Calu3 (cell line): ENCODE measurements at regions of chr4 and their contacts with region 1.

Region 1: GRCh38 chr4:130359542-130359941 is 1263.6 kb downstream of the C4orf33 start:
- DNase-seq: no peak
- H3K4me3 Mint-ChIP-seq: no peak overlapping the region
- H3K27ac Mint-ChIP-seq: no peak overlapping the region
- H3K4me1 Mint-ChIP-seq: no peaks in the 10 kb centered on the region
- H3K27me3 Mint-ChIP-seq: no peaks in the 10 kb centered on the region
- CTCF ChIP-seq: no peak

Region 2: DNA sequence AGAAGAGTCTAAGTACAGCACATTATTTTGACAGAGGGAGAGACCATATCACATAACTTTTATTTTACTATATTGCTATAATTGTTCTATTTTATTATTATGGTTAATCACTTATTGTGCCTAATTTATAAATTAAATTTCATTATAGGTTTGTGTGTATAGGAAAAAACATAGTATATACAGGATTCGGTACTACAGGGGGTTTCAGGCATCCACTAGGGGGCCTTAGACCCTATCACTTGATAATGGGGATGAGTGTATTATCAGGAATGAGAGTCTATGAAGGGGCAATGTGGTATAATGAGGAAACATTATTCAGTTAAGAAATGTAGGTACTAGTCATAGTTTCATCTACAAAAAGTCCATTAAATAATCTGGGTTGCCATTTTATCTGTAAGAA is 430.5 kb before region 1 on chr4:
- CTCF ChIA-PET with region 1: no interaction called
- intact Hi-C with region 1: loop called (anchors 2 kb)
- DNase-seq: peak; percentile 3
- H3K4me3 Mint-ChIP-seq: no peak overlapping the region
- H3K27ac Mint-ChIP-seq: no peak overlapping the region
- H3K4me1 Mint-ChIP-seq: no peaks in the 10 kb centered on the region
- H3K27me3 Mint-ChIP-seq: no peaks in the 10 kb centered on the region
- CTCF ChIP-seq: no peak

Region 3: DNA sequence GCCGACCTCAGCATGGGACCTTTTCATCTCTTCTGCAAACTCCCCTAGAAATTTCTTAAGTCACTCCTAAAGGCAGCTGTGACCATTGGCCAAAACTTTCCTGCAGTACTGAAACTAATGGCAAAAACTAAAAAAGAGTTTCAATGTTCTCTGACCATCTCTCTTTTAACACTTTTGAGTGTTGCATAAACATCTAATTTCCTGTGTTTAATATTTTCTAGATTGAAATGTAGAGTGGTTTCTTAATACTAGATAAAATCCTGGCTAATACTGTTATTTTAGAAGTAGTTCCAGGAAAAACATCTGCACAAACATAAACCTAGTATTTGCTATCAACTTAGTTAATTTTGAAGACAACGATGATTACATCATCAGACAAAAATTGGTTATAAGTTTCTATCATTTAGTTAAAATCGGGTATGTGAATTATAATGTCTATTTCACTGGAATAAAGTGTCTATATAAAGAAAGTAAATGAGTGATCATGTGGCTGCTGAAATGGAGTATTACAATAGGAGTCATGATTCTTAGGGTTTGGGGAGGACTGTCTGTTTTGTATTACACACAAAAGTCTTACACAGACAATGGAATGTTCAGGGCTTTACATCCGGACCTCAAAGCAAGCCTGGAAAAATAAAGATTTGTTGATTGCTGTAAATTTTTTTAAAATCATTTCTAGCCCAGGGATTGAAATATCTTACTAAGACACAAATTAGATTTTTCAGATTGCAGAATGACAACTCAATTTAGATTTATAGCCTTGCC is 59.9 kb after region 1 on chr4:
- CTCF ChIA-PET with region 1: no interaction called
- intact Hi-C with region 1: loop called (anchors 5 kb)
- DNase-seq: no peak
- H3K4me3 Mint-ChIP-seq: no peak overlapping the region
- H3K27ac Mint-ChIP-seq: no peak overlapping the region
- H3K4me1 Mint-ChIP-seq: peaks cover 11% of the 10 kb centered on the region
- H3K27me3 Mint-ChIP-seq: no peaks in the 10 kb centered on the region
- CTCF ChIP-seq: no peak

Region 4: DNA sequence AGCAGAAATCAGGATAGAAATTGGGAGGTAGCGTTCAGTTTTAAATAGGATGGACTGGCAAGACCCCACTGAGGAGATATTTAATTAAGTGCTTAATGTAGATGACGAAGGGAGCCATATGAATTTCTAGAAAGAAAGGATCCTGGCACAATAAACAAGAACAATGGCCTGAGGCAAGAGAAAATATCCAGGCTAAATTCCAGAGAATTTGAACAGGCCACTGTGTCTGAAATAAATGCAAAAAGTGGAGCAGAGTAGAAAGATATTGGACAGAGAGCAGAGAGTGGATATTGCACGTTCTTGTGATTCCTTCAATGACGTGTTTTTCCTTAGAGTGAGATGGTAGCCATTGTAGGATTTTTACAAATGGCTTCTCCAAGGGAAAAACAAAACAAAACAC is 241.2 kb after region 1 on chr4:
- CTCF ChIA-PET with region 1: no interaction called
- intact Hi-C with region 1: no loop called
- DNase-seq: no peak
- H3K4me3 Mint-ChIP-seq: no peak overlapping the region
- H3K27ac Mint-ChIP-seq: no peak overlapping the region
- H3K4me1 Mint-ChIP-seq: peaks cover 9% of the 10 kb centered on the region
- H3K27me3 Mint-ChIP-seq: no peaks in the 10 kb centered on the region
- CTCF ChIP-seq: no peak

Region 5: DNA sequence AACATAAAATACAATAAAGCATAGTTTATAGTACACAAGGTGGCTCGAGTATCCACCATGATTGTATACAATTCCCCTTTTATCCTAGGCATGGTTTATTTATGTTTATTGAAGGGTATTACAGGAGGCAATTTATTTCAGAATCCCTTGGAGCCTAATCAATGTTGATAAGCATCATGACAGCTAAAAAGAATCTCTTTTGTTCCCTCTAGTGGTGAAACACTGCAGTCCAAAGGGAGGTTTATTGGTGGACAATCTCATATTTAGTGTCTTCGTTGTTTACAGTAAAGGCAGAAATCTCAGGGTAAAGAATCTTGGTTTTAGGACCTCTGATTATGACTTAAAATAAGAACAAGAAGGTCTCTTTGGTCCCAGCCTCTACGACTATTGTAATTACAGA is 448.9 kb after region 1 on chr4:
- CTCF ChIA-PET with region 1: no interaction called
- intact Hi-C with region 1: loop called (anchors 1 kb)
- DNase-seq: no peak
- H3K4me3 Mint-ChIP-seq: no peak overlapping the region
- H3K27ac Mint-ChIP-seq: no peak overlapping the region
- H3K4me1 Mint-ChIP-seq: no peaks in the 10 kb centered on the region
- H3K27me3 Mint-ChIP-seq: no peaks in the 10 kb centered on the region
- CTCF ChIP-seq: peak; percentile 32

Region 6: GRCh38 chr4:131084997-131085396 is 725.5 kb after region 1 on chr4:
- CTCF ChIA-PET with region 1: no interaction called
- intact Hi-C with region 1: loop called (anchors 5 kb)
- DNase-seq: no peak
- H3K4me3 Mint-ChIP-seq: no peak overlapping the region
- H3K27ac Mint-ChIP-seq: no peak overlapping the region
- H3K4me1 Mint-ChIP-seq: peaks cover 16% of the 10 kb centered on the region
- H3K27me3 Mint-ChIP-seq: no peaks in the 10 kb centered on the region
- CTCF ChIP-seq: no peak

Region 7: DNA sequence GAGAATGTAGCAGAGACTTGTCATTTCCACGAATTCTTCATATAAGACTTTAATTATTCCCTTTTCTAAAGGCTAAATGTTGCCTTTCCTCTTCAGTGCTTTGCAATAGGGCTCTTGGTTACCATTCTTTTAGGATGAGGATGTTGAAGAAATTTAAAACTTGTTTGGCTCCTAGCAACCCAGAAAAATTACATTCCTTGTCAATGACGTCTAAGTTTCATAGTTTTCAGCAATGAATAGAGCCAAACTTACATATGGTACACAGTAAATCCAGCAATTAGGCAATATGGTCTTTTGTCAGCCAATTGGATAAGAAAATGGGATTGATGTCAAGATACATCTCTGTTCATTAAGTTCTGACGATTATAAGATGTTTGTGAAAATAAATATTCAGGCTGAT is 1150.0 kb after region 1 on chr4:
- CTCF ChIA-PET with region 1: no interaction called
- intact Hi-C with region 1: no loop called
- DNase-seq: no peak
- H3K4me3 Mint-ChIP-seq: no peak overlapping the region
- H3K27ac Mint-ChIP-seq: no peak overlapping the region
- H3K4me1 Mint-ChIP-seq: no peaks in the 10 kb centered on the region
- H3K27me3 Mint-ChIP-seq: no peaks in the 10 kb centered on the region
- CTCF ChIP-seq: no peak